Activated CD4-positive, alpha-beta T cell treated with anti-CD3 and anti-CD28 coated beads for 36 hours (primary cell): ENCODE measurements at regions of chr6 and their contacts with region 1.

Region 1: GRCh38 chr6:158704181-158704822 is 54.4 kb downstream of the SYTL3 start:
- DNase-seq: peak; percentile 87
- ATAC-seq: peak; percentile 93
- H3K4me3 Mint-ChIP-seq: peak overlapping the region; percentile 45
- H3K27ac Mint-ChIP-seq: no peak overlapping the region
- H3K4me1 Mint-ChIP-seq: peaks cover 13% of the 10 kb centered on the region
- H3K27me3 Mint-ChIP-seq: no peaks in the 10 kb centered on the region

Region 2: DNA sequence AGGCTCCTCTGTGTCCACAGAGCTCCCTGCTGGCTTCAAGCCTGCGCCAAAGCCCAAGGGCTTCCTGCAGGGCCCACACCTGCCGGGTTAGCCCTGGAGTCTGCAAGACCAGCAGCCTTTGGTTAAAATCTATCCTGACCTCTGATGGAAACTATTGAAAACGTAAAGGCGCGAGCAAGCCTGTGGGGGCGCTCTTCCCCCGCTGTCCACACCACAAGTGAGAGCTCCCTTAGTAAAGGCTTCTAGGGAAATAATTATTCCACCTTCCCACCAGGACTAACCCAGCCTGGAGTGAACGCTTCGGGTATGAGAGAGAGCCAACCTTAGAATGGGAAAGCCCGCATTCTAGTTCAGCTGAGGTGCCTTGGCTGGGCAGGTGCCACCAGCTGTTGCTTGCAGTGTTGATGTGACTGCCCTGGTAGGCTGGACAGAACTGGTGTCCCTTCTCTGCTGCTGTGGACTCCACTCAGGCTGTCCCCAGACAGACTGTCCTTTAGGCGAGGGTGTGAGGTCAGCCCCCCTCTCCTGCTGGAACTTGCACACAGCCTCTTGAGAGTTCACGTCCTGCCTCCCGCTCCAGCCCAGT is 14.3 kb after region 1 on chr6:
- CTCF ChIA-PET with region 1: interaction called, 11 read pairs
- POLR2A ChIA-PET with region 1: no interaction called
- intact Hi-C with region 1: loop called in 1 of 2 experiments (anchors 1 kb)
- DNase-seq: no peak
- ATAC-seq: no peak
- H3K4me3 Mint-ChIP-seq: no peak overlapping the region
- H3K27ac Mint-ChIP-seq: no peak overlapping the region
- H3K4me1 Mint-ChIP-seq: peaks cover 42% of the 10 kb centered on the region
- H3K27me3 Mint-ChIP-seq: no peaks in the 10 kb centered on the region

Region 3: DNA sequence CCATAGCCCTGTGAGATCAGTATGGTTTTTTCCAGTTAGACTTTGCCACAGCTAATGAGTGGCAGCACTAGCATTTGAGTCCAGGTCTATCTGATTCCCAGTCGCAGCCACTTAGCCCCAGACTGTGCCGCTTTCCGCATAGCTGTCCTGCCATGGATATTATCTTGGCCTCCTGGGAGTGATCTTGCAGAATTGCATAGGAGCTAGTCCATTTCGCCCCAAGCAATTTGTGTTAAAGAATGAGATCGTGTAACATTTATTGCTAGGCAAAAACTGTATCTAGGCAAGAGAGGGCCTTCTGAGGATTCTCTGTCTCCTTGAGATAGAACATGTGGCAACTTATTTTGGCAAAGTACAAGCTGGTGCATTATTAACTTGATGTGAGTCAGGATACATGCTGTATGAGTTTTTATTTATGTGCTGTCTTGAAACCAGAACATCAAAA is 40.7 kb after region 1 on chr6:
- CTCF ChIA-PET with region 1: interaction called, 10 read pairs
- POLR2A ChIA-PET with region 1: no interaction called
- intact Hi-C with region 1: no loop called
- DNase-seq: no peak
- ATAC-seq: no peak
- H3K4me3 Mint-ChIP-seq: no peak overlapping the region
- H3K27ac Mint-ChIP-seq: no peak overlapping the region
- H3K4me1 Mint-ChIP-seq: no peaks in the 10 kb centered on the region
- H3K27me3 Mint-ChIP-seq: no peaks in the 10 kb centered on the region